ENCODE measurements at regions of chr10 and their contacts with region 1.

Region 1: GRCh38 chr10:77111611-77112550 is 525.7 kb downstream of the KCNMA1 start:
- DNase-seq: peak; percentile 10
- ATAC-seq: no peak
- H3K4me3 Mint-ChIP-seq: no peak overlapping the region
- H3K27ac Mint-ChIP-seq: no peak overlapping the region
- H3K4me1 Mint-ChIP-seq: no peaks in the 10 kb centered on the region
- H3K27me3 Mint-ChIP-seq: peaks cover 5% of the 10 kb centered on the region

Region 2: GRCh38 chr10:76547352-76547972 is 564.4 kb before region 1 on chr10:
- CTCF ChIA-PET with region 1: no interaction called
- POLR2A ChIA-PET with region 1: no interaction called
- intact Hi-C with region 1: loop called (anchors 5 kb)
- DNase-seq: peak; percentile 80
- ATAC-seq: no peak
- H3K4me3 Mint-ChIP-seq: no peak overlapping the region
- H3K27ac Mint-ChIP-seq: no peak overlapping the region
- H3K4me1 Mint-ChIP-seq: no peaks in the 10 kb centered on the region
- H3K27me3 Mint-ChIP-seq: peaks cover 2% of the 10 kb centered on the region

Region 3: GRCh38 chr10:76984559-76985443 is 127.1 kb before region 1 on chr10:
- CTCF ChIA-PET with region 1: no interaction called
- POLR2A ChIA-PET with region 1: no interaction called
- intact Hi-C with region 1: loop called (anchors 5 kb)
- DNase-seq: peak; percentile 85
- ATAC-seq: peak; percentile 63
- H3K4me3 Mint-ChIP-seq: no peak overlapping the region
- H3K27ac Mint-ChIP-seq: no peak overlapping the region
- H3K4me1 Mint-ChIP-seq: no peaks in the 10 kb centered on the region
- H3K27me3 Mint-ChIP-seq: no peaks in the 10 kb centered on the region

Region 4: DNA sequence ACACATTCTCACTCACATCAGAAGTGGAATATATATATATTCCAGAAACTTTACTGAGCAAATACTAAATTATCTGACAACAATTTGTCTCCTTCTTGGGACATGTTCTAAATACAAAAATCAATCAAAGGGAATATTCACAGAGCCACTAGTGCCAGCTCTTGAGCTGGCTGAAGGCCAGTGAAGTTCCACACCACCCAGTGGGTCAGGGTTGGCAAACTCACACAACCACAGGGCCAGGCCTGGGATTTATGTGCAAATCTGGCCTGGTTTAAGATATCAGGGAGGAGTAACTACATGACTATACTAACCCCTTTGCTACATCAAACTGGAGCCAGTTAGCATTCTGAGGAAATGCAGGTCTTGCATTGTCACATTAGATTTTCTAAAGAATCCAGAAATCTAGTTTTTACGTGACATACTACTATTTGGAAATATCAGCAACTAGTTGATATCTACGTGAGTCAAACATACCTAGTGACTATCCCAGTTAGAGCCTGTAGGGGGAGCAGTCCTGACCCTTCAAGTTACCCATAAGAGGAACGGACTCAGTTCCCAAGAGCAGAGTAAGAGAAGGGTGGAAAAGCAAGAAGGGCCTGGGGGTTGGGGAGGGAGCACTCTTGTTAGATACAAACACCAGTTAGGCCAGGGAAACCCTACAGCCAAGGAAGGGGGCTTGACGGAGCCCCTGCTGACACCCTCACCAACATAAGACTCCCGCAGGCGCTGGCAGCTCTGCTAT is 74.7 kb before region 1 on chr10:
- CTCF ChIA-PET with region 1: no interaction called
- POLR2A ChIA-PET with region 1: no interaction called
- intact Hi-C with region 1: loop called in 1 of 2 experiments (anchors 2 kb)
- DNase-seq: no peak
- ATAC-seq: no peak
- H3K4me3 Mint-ChIP-seq: no peak overlapping the region
- H3K27ac Mint-ChIP-seq: no peak overlapping the region
- H3K4me1 Mint-ChIP-seq: peaks cover 12% of the 10 kb centered on the region
- H3K27me3 Mint-ChIP-seq: no peaks in the 10 kb centered on the region

Measured in activated CD4-positive, alpha-beta T cell treated with anti-CD3 and anti-CD28 coated beads for 36 hours (primary cell).